Colonic mucosa (tissue), 4 donors: ENCODE measurements at regions of chr1 and their contacts with region 1.

Region 1: DNA sequence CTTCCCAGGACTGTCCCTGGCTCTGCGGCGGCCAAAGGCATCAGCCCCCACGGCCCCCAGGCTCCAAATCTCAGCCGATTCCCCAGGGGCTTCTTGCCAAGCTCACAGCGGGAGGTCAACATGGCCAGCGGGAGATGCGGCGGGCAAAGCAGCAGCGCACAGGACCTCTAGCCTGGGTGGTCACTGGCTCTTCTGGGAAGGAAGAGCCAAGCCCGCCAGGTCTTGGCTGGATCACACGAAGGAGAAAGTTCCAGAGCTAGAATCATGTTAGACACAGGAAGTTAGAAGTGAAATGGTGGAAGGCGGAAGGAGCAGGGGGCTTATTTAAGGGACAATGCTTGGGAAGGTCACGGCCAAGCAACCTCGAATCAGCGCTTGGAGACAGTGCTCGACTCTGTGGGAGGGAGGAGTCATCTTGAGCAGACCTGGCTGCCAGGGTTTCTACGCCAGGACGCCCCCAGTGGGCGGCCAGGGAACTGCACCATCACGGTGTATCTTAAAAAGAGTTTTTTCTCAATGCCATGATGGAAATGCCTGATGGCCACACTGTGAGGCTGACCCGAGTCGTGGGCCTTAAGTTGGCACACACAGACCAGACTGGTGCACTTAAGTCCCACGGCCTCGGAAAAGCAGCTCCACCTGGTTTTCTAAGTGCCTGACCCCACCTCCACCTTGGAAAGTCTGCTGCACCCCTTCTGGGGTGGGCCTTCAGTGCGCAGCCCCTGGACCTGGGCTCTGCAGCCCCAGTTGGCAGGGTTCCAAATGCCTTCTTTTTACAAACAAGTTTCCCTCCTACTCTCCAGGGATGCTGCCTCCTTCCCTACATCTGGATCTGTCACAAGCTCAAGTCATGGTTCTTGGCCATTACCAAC is 29.3 kb downstream of the SLC66A1 start:
- DNase-seq: peak; percentile 80
- H3K4me3 ChIP-seq: no peak overlapping the region
- H3K27ac ChIP-seq: no peak overlapping the region
- H3K4me1 ChIP-seq: no peaks in the 10 kb centered on the region
- H3K27me3 ChIP-seq: no peaks in the 10 kb centered on the region
- CTCF ChIP-seq: peak; percentile 87

Region 2: GRCh38 chr1:19582302-19582701 is 240.9 kb after region 1 on chr1:
- intact Hi-C with region 1: loop called (anchors 5 kb)
- DNase-seq: peak; percentile 89
- H3K4me3 ChIP-seq: no peak overlapping the region
- H3K27ac ChIP-seq: no peak overlapping the region
- H3K4me1 ChIP-seq: no peaks in the 10 kb centered on the region
- H3K27me3 ChIP-seq: no peaks in the 10 kb centered on the region
- CTCF ChIP-seq: peak; percentile 66

Region 3: DNA sequence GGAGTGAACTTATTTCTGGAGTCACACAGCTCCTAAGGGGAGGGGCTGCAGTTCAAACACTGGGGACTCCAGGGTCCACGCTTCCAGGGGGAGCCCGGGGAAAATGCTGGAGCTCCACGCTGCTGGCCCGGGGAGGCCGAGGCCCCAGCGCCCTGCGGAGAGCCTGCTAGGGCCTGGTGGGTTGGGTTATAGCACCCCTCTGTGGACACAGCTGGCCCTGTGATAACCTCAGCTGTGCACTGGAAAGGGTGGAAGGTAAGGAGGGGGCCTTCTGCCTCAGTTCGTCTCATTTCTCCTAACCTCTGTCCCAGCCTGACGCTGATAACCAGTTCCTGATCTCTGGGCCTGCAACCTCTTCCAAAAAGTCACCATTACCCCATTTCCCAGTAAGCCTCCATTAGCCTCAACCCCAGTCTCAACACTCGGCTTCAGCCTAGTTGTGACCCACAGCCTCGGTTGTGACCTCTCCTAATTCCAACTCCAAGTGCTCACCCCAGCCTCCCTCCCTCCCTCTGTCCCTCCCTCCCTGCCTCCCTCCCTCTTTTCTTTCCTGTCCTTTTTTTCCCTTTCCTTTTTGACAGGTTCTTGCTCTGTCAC is 309.8 kb after region 1 on chr1:
- intact Hi-C with region 1: loop called (anchors 5 kb)
- DNase-seq: no peak
- H3K4me3 ChIP-seq: no peak overlapping the region
- H3K27ac ChIP-seq: peak overlapping the region; percentile 43
- H3K4me1 ChIP-seq: peaks cover 33% of the 10 kb centered on the region
- H3K27me3 ChIP-seq: no peaks in the 10 kb centered on the region
- CTCF ChIP-seq: peak; percentile 33

Region 4: GRCh38 chr1:19704247-19705113 is 363.0 kb after region 1 on chr1:
- intact Hi-C with region 1: no loop called
- DNase-seq: peak; percentile 75
- H3K4me3 ChIP-seq: no peak overlapping the region
- H3K27ac ChIP-seq: no peak overlapping the region
- H3K4me1 ChIP-seq: no peaks in the 10 kb centered on the region
- H3K27me3 ChIP-seq: no peaks in the 10 kb centered on the region
- CTCF ChIP-seq: peak; percentile 90